Left lung (tissue), 14 donors: ENCODE measurements at regions of chr18 and their contacts with region 1.

Region 1: GRCh38 chr18:36572135-36572856 is 256.5 kb downstream of the TPGS2 start:
- DNase-seq: peak in 2 of 4 donors; percentile 39 to 68
- ATAC-seq: peak; percentile 78
- H3K4me3 ChIP-seq: no peak overlapping the region
- H3K27ac ChIP-seq: no peak overlapping the region
- H3K4me1 ChIP-seq: no peaks in the 10 kb centered on the region
- H3K27me3 ChIP-seq: no peaks in the 10 kb centered on the region
- CTCF ChIP-seq: peak in 1 of 2 donors; percentile 57

Region 2: DNA sequence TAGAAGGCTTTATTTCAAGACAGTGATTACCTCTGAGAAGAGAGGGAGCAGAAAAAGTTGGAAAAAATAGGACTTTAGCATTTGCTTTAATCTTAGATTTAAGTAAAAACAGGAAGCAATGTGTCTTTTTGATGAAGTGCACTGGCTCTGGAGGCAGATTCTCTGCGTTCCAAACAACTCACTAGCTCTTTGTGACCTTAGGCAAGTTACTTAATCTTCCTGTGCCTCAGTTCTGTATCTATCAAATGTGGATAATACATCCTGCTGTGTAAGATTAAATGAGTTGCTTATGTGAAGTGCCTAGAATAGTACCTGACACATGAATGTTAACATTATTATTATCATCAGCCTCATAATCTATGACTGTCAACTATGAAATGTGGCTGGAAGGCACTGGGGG is 547.3 kb before region 1 on chr18:
- intact Hi-C with region 1: no loop called
- DNase-seq: peak in 1 of 4 donors; percentile 19
- ATAC-seq: no peak
- H3K4me3 ChIP-seq: no peak overlapping the region
- H3K27ac ChIP-seq: no peak overlapping the region
- H3K4me1 ChIP-seq: no peaks in the 10 kb centered on the region
- H3K27me3 ChIP-seq: no peaks in the 10 kb centered on the region
- CTCF ChIP-seq: no peak

Region 3: DNA sequence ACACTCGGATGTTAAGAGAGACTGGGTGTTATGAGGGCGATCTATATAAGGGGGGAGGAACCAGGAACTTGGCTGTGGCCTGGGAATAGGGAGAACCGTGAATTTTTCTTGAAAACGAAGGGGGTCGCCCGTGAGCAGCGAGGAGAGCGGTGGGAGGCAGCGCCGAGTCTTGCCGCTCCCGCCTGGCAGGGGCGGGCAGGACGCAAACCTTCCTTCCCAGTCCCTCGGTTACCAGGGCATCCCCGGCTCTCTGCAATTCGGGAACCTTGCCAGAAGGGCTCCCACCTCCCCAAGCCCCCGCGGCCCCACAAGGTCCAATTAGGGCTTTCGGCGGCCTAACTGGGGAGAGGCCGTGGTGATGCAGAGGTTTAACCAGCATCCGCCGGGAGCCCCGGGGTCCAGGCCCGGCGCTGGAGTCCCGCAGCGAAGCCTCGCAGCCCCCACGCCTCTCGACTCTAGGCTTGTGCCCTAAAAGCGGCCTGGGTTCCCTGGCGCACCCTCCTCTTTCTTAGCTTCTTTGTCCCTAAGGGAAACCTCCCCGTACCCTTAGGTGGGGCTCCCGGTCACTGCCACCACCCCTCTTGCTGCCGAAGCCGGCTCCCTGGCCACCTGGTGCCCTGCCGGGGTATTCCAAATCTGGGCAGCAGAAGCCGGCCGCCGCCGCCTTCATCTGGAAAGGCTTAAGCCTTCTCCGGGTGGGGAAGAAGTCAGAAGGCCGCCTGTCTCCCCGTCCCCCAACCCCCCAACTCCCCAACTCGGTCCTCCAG is 275.5 kb before region 1 on chr18:
- intact Hi-C with region 1: loop called in 1 of 2 experiments (anchors 10 kb)
- DNase-seq: peak; percentile 56 to 83 (median 70)
- ATAC-seq: peak; percentile 70
- H3K4me3 ChIP-seq: peak overlapping the region; percentile 34 to 45
- H3K27ac ChIP-seq: no peak overlapping the region
- H3K4me1 ChIP-seq: peaks cover 11 to 23% of the 10 kb centered on the region in 2 donors
- H3K27me3 ChIP-seq: peaks cover 28 to 83% of the 10 kb centered on the region in 2 donors
- CTCF ChIP-seq: peak in 1 of 2 donors; percentile 13

Region 4: DNA sequence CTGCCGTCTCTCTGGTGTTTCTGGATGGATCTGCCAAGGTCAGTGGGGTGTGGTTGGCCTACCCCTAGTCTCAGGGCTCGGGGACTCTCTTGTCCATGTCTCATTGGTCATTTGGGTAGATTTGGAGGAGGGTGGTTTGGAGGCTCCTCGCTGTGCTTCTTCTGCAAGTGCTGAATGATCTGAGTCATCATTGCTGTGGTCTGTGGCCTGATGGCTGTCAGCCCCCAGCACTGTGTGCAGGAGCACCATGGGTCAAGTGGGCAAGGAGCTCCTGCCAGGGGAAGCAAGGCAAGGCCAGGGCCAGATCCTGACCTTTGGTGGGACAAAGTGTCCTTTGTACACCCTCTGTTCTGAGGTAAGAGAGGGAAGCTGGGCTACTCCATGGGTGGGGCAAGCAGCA is 52.9 kb before region 1 on chr18:
- intact Hi-C with region 1: no loop called
- DNase-seq: no peak
- ATAC-seq: no peak
- H3K4me3 ChIP-seq: no peak overlapping the region
- H3K27ac ChIP-seq: no peak overlapping the region
- H3K4me1 ChIP-seq: no peaks in the 10 kb centered on the region
- H3K27me3 ChIP-seq: no peaks in the 10 kb centered on the region
- CTCF ChIP-seq: no peak

Region 5: DNA sequence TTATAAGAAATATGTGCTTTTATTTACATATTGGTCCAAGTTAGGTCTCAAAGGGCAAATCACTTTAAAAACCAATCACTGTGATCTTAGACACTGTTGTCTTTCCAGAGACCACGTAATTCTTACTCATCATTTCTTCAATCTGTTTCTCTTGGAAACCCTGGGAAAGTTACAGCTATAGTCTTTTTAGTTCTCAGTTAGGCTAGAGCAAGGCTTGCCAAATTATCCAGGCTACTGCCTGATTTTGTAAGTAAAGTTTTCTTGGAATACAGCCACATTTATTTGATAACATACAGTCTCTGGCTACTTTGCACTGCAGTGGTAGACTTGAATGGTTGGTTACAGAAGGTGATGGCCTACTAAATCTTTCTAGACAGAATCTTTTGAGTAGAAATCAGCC is 362.6 kb after region 1 on chr18:
- intact Hi-C with region 1: no loop called
- DNase-seq: peak in 1 of 4 donors; percentile 32
- ATAC-seq: no peak
- H3K4me3 ChIP-seq: no peak overlapping the region
- H3K27ac ChIP-seq: no peak overlapping the region
- H3K4me1 ChIP-seq: no peaks in the 10 kb centered on the region
- H3K27me3 ChIP-seq: no peaks in the 10 kb centered on the region
- CTCF ChIP-seq: no peak